ENCODE measurements at regions of chr9 and their contacts with region 1.

Region 1: DNA sequence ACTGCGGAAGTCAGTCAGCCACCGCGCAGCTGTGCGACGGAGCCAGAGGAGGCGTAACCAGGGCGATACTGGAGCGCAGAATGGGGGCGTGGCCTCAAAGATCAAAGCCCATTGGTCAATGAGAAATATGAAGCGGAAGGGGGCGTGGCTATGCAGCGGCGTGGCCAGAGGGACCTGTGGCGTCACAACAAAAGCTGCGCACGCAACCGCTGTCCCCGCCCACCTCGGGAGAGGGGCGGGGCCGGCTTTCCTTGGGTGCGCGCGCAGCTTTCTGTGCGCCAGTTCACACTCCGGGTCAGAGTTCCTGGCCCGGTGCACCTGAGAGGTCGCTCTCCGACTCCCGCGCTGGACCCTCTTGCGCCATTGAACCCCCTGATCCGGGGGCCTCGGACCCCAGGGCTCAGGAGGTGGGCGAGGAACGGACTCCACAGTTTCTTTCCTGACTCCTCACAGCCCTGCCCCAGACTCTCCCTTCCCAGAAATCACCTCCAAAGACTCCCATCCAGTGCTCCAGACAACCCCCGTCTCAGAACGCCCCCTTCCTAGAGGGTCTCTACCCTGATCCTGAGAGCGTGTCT is at the starts of genes GOLGA2 and SWI5:
- DNase-seq: peak; percentile 98 to 100 (median 99)

Region 2: DNA sequence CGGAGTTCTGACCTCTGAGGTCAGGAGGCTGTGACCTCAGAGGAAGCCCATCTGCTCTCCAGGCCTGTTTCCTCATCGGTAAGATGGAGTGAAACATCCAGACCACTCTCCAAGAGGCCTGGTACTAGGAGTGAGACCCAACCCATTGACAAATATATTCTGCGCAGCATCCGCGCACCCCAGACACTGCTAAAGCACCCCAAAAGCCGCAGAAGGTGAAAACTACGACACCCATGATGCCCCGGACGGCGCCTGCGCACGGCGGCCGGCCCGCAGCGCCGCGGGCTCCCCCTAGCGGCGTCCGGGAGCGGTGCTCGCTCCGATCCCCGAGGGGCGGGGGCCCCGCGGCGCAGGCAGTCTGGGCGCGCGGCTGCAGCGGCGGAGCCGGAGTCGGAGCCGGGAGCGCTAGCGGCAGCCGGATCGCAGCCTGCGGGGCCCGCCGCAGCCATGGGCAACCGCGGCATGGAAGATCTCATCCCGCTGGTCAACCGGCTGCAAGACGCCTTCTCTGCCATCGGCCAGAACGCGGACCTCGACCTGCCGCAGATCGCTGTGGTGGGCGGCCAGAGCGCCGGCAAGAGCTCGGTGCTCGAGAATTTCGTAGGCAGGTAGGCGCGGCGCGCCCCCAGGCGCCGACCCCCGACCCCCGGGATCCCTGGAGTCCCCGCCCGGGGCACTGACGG is 72.9 kb before region 1 on chr9 and contains the start of gene DNM1:
- intact Hi-C with region 1: no loop called
- DNase-seq: peak in 40 of 42 donors; percentile 52 to 87 (median 70)

Region 3: DNA sequence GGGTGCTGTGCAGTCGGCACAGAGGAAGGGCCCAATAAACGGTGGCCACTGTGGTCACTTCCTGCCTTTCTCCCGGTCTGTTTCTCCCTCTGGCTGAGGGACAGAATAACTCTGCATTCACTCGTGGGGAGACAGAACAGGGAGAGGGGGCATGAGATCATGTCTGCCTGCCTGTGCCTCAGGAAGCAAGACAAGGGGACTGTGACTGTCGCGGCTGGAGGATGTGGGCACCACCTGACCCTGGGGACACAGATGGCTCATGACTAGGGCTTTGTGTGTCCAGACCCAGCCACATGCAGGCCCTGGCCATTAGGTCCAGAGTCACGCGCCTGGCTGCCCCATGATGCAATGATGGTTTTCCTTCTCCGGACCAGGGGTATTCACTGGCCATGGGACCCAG is 40.3 kb after region 1 on chr9:
- intact Hi-C with region 1: no loop called
- DNase-seq: peak; percentile 76 to 98 (median 93)

Region 4: GRCh38 chr9:128420060-128420650 is 144.1 kb after region 1 on chr9:
- intact Hi-C with region 1: loop called (anchors 10 kb)
- DNase-seq: peak in 37 of 42 donors; percentile 51 to 87 (median 73)